Left ventricle myocardium inferior (tissue), 1 donor: ENCODE measurements at regions of chr1 and their contacts with region 1.

Region 1: GRCh38 chr1:11838349-11839272 is 9.0 kb downstream of the NPPA start:
- DNase-seq: peak; percentile 69
- H3K4me3 ChIP-seq: no peak overlapping the region
- H3K27ac ChIP-seq: no peak overlapping the region
- H3K4me1 ChIP-seq: peaks cover 22% of the 10 kb centered on the region
- H3K27me3 ChIP-seq: no peaks in the 10 kb centered on the region
- CTCF ChIP-seq: peak; percentile 100

Region 2: DNA sequence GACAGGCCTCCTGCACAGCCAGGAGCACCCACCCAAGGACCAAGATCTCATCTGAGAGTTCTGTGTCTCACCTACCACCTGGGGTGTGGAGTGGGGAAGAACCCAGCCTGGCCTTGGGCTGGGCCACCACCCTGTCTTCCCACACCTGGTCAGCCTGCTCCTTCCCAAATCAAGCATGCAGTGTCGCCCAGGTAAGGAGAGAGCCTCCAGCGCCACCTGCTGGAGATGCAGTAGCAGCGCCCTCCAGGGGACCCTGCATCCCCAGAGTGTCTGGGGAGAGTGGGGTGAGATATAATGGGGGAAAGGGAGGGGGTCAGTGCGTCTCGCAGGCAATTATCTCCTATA is 55.3 kb after region 1 on chr1:
- intact Hi-C with region 1: loop called (anchors 5 kb)
- DNase-seq: peak; percentile 58
- H3K4me3 ChIP-seq: no peak overlapping the region
- H3K27ac ChIP-seq: no peak overlapping the region
- H3K4me1 ChIP-seq: no peaks in the 10 kb centered on the region
- H3K27me3 ChIP-seq: peaks cover 41% of the 10 kb centered on the region
- CTCF ChIP-seq: peak; percentile 89